Tibial artery (tissue), 4 donors: ENCODE measurements at regions of chr15 and their contacts with region 1.

Region 1: GRCh38 chr15:34367101-34368081 is at the start of gene LPCAT4:
- DNase-seq: peak; percentile 87 to 92
- H3K4me3 ChIP-seq: peak within 1 kb of the TSS; percentile 63 to 80
- H3K27ac ChIP-seq: peak within 1 kb of the TSS; percentile 85 to 89
- H3K4me1 ChIP-seq: peaks cover 0 to 20% (median 17%) of the 10 kb centered on the region in 4 donors
- H3K27me3 ChIP-seq: no peaks in the 10 kb centered on the region
- CTCF ChIP-seq: peak; percentile 88 to 98

Region 2: DNA sequence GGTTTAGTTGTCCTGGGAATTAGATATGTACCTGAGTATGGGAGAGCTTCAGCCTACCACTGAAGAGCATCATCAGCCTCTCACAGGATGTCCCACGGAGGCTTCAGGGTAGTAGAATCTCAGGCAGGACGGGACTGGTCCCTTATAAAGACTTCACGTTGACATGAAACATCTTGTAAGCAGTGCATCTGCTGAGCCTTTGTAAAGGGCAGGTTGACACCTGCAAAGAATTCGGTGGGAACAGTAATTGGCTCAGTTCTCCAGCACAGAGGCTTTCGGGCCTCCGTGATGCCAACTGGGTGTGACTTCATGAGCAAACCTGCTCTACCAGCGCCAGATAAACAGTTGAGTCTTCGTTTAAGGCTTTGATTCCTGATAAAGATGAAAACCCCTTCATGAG is 301.4 kb before region 1 on chr15:
- intact Hi-C with region 1: loop called (anchors 10 kb)
- DNase-seq: no peak
- H3K4me3 ChIP-seq: no peak overlapping the region
- H3K27ac ChIP-seq: no peak overlapping the region
- H3K4me1 ChIP-seq: no peaks in the 10 kb centered on the region
- H3K27me3 ChIP-seq: no peaks in the 10 kb centered on the region
- CTCF ChIP-seq: no peak

Region 3: GRCh38 chr15:34239151-34239808 is 128.1 kb before region 1 on chr15:
- intact Hi-C with region 1: loop called (anchors 10 kb)
- DNase-seq: no peak
- H3K4me3 ChIP-seq: no peak overlapping the region
- H3K27ac ChIP-seq: no peak overlapping the region
- H3K4me1 ChIP-seq: no peaks in the 10 kb centered on the region
- H3K27me3 ChIP-seq: no peaks in the 10 kb centered on the region
- CTCF ChIP-seq: no peak

Region 4: DNA sequence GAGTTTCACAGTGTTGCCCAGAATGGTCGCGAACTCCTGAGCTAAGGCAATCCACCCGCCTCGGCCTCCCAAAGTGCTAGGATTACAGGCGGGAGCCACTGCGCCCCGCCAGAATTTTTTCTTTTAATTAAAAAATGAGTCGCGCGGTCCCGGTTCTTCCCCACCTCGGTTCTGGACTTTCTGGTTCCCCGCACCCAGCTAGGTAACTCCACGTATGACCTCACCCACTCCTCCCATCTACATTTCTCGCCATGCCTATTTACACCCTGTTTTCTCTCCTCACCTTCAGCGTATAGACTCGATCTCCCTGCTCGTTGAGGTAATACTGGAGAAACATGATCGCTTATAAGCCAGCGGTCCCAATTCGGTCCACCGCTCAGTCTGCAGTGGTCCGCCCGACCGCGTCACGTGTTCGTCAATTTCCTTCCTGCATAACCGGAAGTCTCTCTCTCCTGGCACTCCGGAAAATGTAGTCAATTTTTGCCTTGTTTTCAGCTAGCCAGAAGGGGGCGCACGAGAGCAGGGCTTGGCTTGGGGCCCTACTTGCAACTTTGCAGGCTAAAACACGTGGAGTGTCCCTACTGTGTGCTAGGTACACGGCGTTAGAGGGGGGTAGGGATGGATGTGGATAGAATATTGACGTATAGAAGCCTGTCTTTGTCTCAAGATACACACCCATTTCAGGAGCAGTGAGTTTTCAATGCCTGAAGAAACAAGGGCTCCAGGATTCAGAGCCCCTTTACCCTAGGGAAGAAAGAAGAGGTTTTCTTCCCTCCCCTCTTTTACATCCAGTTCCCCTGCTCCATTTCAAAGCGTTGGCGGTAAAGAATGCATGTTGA is 24.4 kb before region 1 on chr15 and contains the starts of genes NOP10 and NUTM1:
- intact Hi-C with region 1: loop called (anchors 1 kb)
- DNase-seq: peak; percentile 89 to 93
- H3K4me3 ChIP-seq: peak within 1 kb of the TSS; percentile 74 to 77
- H3K27ac ChIP-seq: peak within 1 kb of the TSS; percentile 84 to 90
- H3K4me1 ChIP-seq: peaks cover 0 to 15% (median 11%) of the 10 kb centered on the region in 4 donors
- H3K27me3 ChIP-seq: no peaks in the 10 kb centered on the region
- CTCF ChIP-seq: peak; percentile 92 to 94